ENCODE measurements at regions of chr5 and their contacts with region 1.

Region 1: GRCh38 chr5:132315529-132316083 is 21.4 kb downstream of the SLC22A4 start:
- DNase-seq: no peak
- ATAC-seq: no peak
- H3K4me3 ChIP-seq: no peak overlapping the region
- H3K27ac ChIP-seq: no peak overlapping the region
- H3K4me1 ChIP-seq: peaks cover 15% of the 10 kb centered on the region
- H3K27me3 ChIP-seq: no peaks in the 10 kb centered on the region
- CTCF ChIP-seq: no peak

Region 2: DNA sequence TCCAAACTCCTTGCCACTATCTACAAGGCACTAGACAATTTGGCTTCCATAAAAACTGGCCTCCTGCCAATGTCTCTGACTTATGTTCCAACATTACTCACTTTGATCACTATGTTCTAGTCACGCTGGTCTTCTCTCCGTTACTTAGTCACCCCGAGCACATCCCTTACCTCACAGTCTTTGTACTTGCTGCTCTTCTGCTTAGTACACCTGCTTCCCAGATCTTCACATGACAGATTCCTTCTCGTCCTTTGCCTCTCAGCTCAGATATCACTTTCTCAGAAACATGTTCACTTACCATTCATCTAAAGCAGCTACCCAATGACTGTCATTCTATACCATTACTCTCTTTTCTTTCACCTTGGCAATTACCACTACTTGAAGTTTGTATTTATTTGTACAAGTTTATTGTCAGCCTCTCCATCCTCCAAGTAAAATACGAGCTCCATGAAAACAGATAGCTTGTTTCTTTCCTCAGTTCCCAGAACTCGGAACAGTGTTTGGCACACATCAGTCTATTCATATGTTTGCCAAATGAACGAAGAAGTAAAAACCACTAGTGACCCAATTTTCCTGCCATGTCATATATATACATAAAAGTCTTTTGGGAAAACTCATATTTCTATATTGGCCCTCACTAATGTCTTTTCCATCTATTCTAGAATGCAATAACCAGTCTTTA is 48.0 kb after region 1 on chr5:
- CTCF ChIA-PET with region 1: no interaction called
- POLR2A ChIA-PET with region 1: no interaction called
- intact Hi-C with region 1: loop called (anchors 5 kb)
- DNase-seq: peak; percentile 94
- ATAC-seq: peak; percentile 95
- H3K4me3 ChIP-seq: no peak overlapping the region
- H3K27ac ChIP-seq: peak overlapping the region; percentile 44
- H3K4me1 ChIP-seq: peaks cover 35% of the 10 kb centered on the region
- H3K27me3 ChIP-seq: no peaks in the 10 kb centered on the region
- CTCF ChIP-seq: no peak